AG04450 (cell line): ENCODE measurements at regions of chr20 and their contacts with region 1.

Region 1: DNA sequence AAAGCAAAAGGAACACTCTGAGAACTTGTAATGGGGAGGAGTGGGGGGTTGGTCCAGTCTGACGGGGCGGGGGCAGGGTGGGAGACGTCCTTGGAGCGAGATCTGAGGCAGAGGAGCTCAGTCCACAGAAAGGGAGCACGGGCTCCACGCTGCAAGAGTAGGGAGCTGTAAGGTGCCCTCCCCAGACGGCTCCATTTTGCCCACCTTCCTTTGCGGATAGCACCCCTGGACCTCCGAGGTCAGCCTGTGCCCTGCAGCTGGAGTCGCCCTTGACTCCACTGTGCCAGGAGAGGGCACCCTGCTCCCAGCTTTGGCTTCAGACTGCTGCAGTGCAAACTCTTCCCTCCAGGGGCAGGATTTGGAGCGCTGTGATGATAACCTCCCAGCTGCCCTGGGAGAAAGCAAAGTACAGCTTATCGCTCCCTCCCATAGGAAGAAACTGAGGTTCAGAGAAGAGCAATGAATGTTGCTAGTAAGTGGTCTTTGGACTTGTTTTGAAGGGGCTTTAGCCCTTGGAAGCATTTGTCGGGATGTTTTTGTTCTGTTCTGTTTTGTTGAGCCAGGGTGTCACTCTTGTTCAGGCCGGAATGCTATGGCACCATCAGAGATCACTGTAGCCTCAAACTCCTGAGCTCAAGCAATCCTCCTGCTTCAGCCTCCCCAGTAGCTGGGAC is 9.5 kb upstream of the AHCY start:
- DNase-seq: peak; percentile 69
- H3K4me3 ChIP-seq: peak overlapping the region; percentile 51
- H3K27ac ChIP-seq: no peak overlapping the region
- H3K27me3 ChIP-seq: no peaks in the 10 kb centered on the region
- CTCF ChIP-seq: peak; percentile 100

Region 2: GRCh38 chr20:34190679-34191090 is 122.0 kb before region 1 on chr20:
- CTCF ChIA-PET with region 1: interaction called, 34 read pairs
- POLR2A ChIA-PET with region 1: no interaction called
- DNase-seq: peak; percentile 78
- H3K4me3 ChIP-seq: no peak overlapping the region
- H3K27ac ChIP-seq: no peak overlapping the region
- H3K27me3 ChIP-seq: peaks cover 47% of the 10 kb centered on the region
- CTCF ChIP-seq: peak; percentile 92

Region 3: GRCh38 chr20:34350095-34350494 is 37.4 kb after region 1 on chr20:
- CTCF ChIA-PET with region 1: interaction called, 18 read pairs
- POLR2A ChIA-PET with region 1: no interaction called
- DNase-seq: no peak
- H3K4me3 ChIP-seq: no peak overlapping the region
- H3K27ac ChIP-seq: no peak overlapping the region
- H3K27me3 ChIP-seq: no peaks in the 10 kb centered on the region
- CTCF ChIP-seq: no peak

Region 4: GRCh38 chr20:34410336-34410735 is 97.7 kb after region 1 on chr20:
- CTCF ChIA-PET with region 1: interaction called, 37 read pairs
- POLR2A ChIA-PET with region 1: no interaction called
- DNase-seq: no peak
- H3K4me3 ChIP-seq: no peak overlapping the region
- H3K27ac ChIP-seq: no peak overlapping the region
- H3K27me3 ChIP-seq: no peaks in the 10 kb centered on the region
- CTCF ChIP-seq: no peak

Region 5: DNA sequence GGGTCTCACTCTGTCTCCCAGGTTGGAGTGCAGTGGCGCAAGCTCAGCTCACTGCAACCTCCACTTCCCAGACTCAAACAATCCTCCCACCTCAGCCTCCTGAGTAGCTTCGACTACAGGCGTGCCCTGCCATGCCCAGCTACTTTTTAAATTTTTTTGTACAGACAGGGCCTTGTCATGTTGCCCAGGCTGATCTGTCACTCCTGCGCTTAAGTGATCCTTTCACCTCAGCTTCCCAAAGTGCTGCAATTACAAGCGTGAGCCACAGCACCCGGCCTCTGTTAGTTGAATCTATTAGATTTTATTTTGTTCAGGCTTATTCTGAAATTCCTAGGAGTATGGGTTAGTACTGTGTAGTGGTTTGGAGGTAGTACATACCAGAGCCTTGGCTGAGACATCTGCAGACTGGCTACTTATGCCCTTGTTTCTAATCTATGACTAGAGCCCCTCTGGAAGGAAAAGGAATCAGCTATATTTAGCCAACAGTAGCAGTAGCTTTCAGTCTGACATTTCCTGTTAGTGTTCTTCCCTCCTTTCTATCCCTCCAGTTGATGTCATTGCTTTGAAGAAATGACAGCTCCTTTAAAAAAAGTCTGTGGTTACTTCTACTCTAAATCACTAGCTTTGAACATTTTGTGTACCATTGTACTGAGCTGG is 124.8 kb after region 1 on chr20:
- CTCF ChIA-PET with region 1: interaction called, 21 read pairs
- POLR2A ChIA-PET with region 1: no interaction called
- DNase-seq: no peak
- H3K4me3 ChIP-seq: no peak overlapping the region
- H3K27ac ChIP-seq: no peak overlapping the region
- H3K27me3 ChIP-seq: no peaks in the 10 kb centered on the region
- CTCF ChIP-seq: no peak

Region 6: DNA sequence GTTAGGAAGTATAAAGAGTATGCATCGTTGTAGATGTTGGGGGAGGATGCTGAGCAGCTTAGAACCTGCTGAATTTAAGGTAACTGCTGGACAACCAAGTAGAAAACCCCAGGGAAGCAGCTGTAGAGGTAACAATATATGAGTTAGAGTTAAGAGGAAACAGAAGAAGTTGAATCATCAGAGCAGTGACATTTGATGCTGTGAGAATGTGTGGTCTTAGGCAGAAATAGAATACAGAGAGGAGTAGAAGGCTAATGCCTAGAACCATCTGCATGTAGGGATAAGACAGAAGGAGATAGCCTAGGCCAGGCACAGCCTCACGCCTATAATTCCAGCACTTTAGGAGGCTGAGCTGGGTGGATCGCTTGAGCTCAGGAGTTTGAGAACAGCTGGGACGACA is 181.0 kb after region 1 on chr20:
- CTCF ChIA-PET with region 1: interaction called, 11 read pairs
- POLR2A ChIA-PET with region 1: no interaction called
- DNase-seq: no peak
- H3K4me3 ChIP-seq: no peak overlapping the region
- H3K27ac ChIP-seq: no peak overlapping the region
- H3K27me3 ChIP-seq: no peaks in the 10 kb centered on the region
- CTCF ChIP-seq: no peak

Region 7: GRCh38 chr20:34538671-34539123 is 226.0 kb after region 1 on chr20:
- CTCF ChIA-PET with region 1: interaction called, 11 read pairs
- POLR2A ChIA-PET with region 1: no interaction called
- DNase-seq: no peak
- H3K4me3 ChIP-seq: no peak overlapping the region
- H3K27ac ChIP-seq: no peak overlapping the region
- H3K27me3 ChIP-seq: no peaks in the 10 kb centered on the region
- CTCF ChIP-seq: peak; percentile 87